ENCODE measurements at regions of chr15 and their contacts with region 1.

Region 1: GRCh38 chr15:67550522-67550921 is 8.0 kb downstream of the MAP2K5 start:
- DNase-seq: no peak
- H3K4me3 ChIP-seq: no peak overlapping the region
- H3K27ac ChIP-seq: no peak overlapping the region
- H3K4me1 ChIP-seq: no peaks in the 10 kb centered on the region
- H3K27me3 ChIP-seq: no peaks in the 10 kb centered on the region
- CTCF ChIP-seq: no peak
- POLR2A ChIP-seq: no peak

Region 2: GRCh38 chr15:67670647-67671305 is 120.3 kb after region 1 on chr15:
- intact Hi-C with region 1: no loop called
- DNase-seq: no peak
- H3K4me3 ChIP-seq: no peak overlapping the region
- H3K27ac ChIP-seq: no peak overlapping the region
- H3K4me1 ChIP-seq: no peaks in the 10 kb centered on the region
- H3K27me3 ChIP-seq: no peaks in the 10 kb centered on the region
- CTCF ChIP-seq: no peak
- POLR2A ChIP-seq: no peak

Region 3: DNA sequence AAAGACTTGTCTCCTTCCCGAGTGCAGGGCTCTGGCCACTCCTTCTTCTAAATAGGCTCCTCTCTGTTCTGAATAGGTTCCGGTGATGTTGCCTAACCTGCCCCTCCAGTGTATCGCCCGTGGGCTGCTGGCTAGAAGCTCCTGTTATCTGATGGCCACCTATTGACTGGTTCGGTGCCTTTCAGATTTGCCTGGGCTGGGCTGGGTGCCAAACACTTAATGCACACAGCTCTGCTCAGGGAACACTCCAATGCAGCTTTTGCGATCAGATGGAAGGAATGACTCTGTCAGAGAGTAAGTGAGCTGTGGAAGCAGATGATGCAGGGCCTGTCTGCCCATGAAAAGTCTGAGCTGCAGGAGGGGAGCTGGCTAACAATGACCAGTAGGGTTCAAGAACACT is 1141.2 kb after region 1 on chr15:
- intact Hi-C with region 1: loop called (anchors 10 kb)
- DNase-seq: peak; percentile 48 to 73
- H3K4me3 ChIP-seq: no peak overlapping the region
- H3K27ac ChIP-seq: no peak overlapping the region
- H3K4me1 ChIP-seq: no peaks in the 10 kb centered on the region
- H3K27me3 ChIP-seq: no peaks in the 10 kb centered on the region
- CTCF ChIP-seq: no peak
- POLR2A ChIP-seq: no peak